Activated naive CD4-positive, alpha-beta T cell treated with anti-CD3 and anti-CD28 coated beads for 36 hours (primary cell): ENCODE measurements at regions of chr10 and their contacts with region 1.

Region 1: DNA sequence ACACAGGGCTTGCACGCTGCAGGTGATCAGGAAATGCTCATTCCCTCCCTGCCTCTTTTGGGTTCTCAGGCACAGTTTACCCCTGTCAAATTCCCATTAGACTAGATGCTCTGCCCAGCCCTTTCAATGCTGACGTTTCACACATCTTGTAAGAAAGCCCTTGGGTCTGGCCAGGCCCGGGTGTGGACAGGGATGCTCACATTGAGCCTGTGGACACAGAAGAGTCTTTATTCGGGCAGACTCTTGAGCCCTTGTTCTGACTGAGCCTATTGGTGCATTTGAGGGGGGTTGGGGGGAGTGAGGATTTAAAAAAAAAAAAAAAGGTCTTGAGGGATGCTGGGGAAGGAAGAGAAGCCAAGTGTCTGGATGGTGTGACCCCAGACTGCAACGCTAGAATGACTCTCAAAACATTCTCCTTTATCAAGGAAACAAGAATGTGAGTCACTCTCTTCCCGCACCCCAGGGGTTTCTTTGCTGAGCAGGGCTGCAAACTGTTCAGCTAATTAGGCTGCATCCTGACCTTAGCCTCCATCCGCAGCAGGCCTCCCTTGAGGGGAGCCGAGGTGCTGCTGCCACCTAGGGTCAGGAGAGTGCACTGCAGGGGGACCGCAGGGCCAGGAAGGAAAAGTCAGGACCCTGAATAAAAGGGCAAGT is 53.6 kb upstream of the TMEM72 start:
- DNase-seq: peak; percentile 76
- H3K4me3 Mint-ChIP-seq: no peak overlapping the region
- H3K27ac Mint-ChIP-seq: no peak overlapping the region
- H3K4me1 Mint-ChIP-seq: no peaks in the 10 kb centered on the region
- H3K27me3 Mint-ChIP-seq: peaks cover 3% of the 10 kb centered on the region

Region 2: DNA sequence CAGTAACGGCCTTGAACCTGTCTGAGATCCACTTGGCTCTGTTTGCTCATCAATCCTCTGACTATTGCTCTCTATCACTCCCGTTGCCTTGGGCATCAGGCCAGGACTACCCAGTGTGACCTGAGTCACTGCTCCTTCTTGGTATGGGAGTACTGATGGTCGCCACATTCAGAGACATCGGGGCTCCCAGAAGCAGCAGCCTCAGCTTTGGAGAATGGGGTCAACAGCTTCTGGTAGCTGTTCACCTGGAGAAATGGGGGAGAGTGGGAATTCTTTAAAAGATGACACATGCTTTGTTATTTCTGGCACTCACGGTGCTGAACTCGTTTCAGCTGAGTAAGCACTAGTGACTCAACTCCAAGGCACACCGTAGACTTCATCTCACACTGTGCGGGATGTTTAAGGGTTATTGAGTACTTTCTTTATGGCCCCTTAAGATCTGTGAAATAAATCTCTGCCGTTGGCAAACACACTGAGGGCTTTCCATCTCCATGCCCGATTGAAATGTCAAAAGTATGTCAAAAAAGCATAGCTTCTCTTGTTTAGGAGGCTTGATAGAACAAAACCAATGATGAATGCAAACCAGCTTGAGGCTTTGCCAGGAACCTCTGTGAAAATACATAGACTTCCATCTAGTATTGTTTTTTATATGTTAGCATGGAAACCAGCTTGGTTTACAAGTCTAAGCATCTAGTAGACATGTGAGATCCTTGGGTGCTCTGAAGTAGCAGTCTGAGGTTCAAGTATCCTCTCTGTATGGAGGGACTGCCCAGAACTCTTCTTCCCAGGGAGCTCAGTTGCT is 805.7 kb before region 1 on chr10:
- CTCF ChIA-PET with region 1: no interaction called
- intact Hi-C with region 1: loop called (anchors 10 kb)
- DNase-seq: no peak
- H3K4me3 Mint-ChIP-seq: no peak overlapping the region
- H3K27ac Mint-ChIP-seq: no peak overlapping the region
- H3K4me1 Mint-ChIP-seq: peaks cover 3% of the 10 kb centered on the region
- H3K27me3 Mint-ChIP-seq: peaks cover 25% of the 10 kb centered on the region

Region 3: GRCh38 chr10:44310762-44311562 is 546.5 kb before region 1 on chr10:
- CTCF ChIA-PET with region 1: no interaction called
- intact Hi-C with region 1: loop called (anchors 5 kb)
- DNase-seq: peak; percentile 76
- H3K4me3 Mint-ChIP-seq: no peak overlapping the region
- H3K27ac Mint-ChIP-seq: no peak overlapping the region
- H3K4me1 Mint-ChIP-seq: peaks cover 8% of the 10 kb centered on the region
- H3K27me3 Mint-ChIP-seq: peaks cover 13% of the 10 kb centered on the region

Region 4: DNA sequence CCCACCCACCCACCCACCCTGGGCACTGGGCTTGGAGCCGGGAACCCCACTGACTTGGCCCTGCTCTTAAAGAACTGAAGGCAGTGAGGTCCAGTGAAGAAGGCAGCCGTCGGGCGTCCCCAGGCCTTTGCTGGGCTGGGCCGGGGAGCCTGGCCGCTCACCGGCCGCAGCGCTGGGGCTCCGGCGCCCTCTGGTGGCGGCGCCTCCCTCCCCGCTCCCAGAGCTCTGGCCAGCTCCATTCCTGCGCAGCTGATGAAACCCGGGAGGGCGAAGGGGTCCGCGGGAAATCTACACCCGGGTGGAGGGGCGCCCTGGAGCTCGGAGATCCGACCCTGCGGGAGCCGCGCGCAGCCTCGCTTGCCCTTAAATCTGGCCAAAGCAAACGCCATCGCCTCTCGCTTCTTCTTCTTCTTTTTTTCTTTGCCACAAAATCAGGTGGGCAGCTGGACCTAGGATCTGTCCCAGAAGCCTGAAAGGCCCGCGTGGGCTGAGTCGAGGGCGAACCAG is 470.9 kb before region 1 on chr10:
- CTCF ChIA-PET with region 1: interaction called, 4 read pairs
- intact Hi-C with region 1: loop called (anchors 5 kb)
- DNase-seq: peak; percentile 22
- H3K4me3 Mint-ChIP-seq: no peak overlapping the region
- H3K27ac Mint-ChIP-seq: no peak overlapping the region
- H3K4me1 Mint-ChIP-seq: peaks cover 4% of the 10 kb centered on the region
- H3K27me3 Mint-ChIP-seq: peaks cover 28% of the 10 kb centered on the region